Colonic mucosa (tissue), 4 donors: ENCODE measurements at regions of chr9 and their contacts with region 1.

Region 1: GRCh38 chr9:131053896-131054295 is 42.4 kb upstream of the AIF1L start:
- DNase-seq: no peak
- H3K4me3 ChIP-seq: no peak overlapping the region
- H3K27ac ChIP-seq: no peak overlapping the region
- H3K4me1 ChIP-seq: no peaks in the 10 kb centered on the region
- H3K27me3 ChIP-seq: no peaks in the 10 kb centered on the region
- CTCF ChIP-seq: no peak

Region 2: GRCh38 chr9:129981180-129981907 is 1072.6 kb before region 1 on chr9:
- intact Hi-C with region 1: no loop called
- DNase-seq: no peak
- H3K4me3 ChIP-seq: no peak overlapping the region
- H3K27ac ChIP-seq: no peak overlapping the region
- H3K4me1 ChIP-seq: no peaks in the 10 kb centered on the region
- H3K27me3 ChIP-seq: no peaks in the 10 kb centered on the region
- CTCF ChIP-seq: no peak

Region 3: DNA sequence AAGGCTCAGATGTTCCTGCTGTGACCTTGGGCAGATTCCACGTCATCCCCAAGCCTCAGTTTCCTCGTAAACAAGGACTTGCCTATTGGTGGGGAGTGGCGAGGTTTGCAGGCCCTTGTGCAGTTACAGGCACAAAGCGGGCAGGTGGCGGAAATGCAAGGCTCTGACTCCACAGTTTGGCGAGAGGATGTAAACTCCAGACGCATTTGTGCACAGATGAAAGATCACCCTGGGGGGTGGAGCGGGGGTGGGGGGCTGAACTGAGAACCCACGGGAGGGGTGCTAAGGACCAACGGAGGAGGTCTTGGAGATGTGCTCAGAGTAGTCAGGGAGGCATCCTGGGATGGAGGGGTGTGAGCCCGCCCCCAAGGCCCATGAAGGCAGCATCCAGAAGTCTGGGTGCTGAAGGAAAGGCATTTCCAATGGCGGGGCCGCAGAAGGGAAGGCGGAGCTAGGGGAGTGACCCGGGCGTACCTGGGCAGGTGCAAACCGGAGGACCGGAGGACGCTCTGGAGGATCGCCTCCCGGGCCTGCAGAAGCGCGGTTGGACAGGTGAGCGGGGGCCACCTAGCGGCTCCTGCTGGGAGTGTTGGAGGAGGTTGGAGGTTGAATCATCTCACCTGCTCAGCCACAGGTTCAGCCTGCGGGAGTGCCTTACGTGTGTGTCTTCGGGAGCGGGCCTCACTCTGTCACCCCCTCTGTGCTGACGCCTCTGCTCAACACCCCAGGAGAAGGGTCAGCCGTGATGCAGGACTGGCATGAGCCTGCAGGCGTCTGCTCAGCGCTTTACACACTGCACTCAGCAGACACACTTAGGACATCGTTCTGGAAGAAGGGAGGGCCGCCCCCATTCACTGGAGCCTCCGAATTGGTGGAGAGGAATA is 113.0 kb before region 1 on chr9:
- intact Hi-C with region 1: no loop called
- DNase-seq: peak; percentile 96
- H3K4me3 ChIP-seq: no peak overlapping the region
- H3K27ac ChIP-seq: no peak overlapping the region
- H3K4me1 ChIP-seq: peaks cover 4% of the 10 kb centered on the region
- H3K27me3 ChIP-seq: peaks cover 34% of the 10 kb centered on the region
- CTCF ChIP-seq: peak; percentile 87

Region 4: GRCh38 chr9:131122158-131122557 is 68.3 kb after region 1 on chr9:
- intact Hi-C with region 1: loop called (anchors 2 kb)
- DNase-seq: no peak
- H3K4me3 ChIP-seq: no peak overlapping the region
- H3K27ac ChIP-seq: no peak overlapping the region
- H3K4me1 ChIP-seq: peaks cover 14% of the 10 kb centered on the region
- H3K27me3 ChIP-seq: no peaks in the 10 kb centered on the region
- CTCF ChIP-seq: no peak

Region 5: GRCh38 chr9:131266266-131267229 is 212.7 kb after region 1 on chr9:
- intact Hi-C with region 1: no loop called
- DNase-seq: no peak
- H3K4me3 ChIP-seq: no peak overlapping the region
- H3K27ac ChIP-seq: peak overlapping the region; percentile 27
- H3K4me1 ChIP-seq: no peaks in the 10 kb centered on the region
- H3K27me3 ChIP-seq: no peaks in the 10 kb centered on the region
- CTCF ChIP-seq: no peak

Region 6: DNA sequence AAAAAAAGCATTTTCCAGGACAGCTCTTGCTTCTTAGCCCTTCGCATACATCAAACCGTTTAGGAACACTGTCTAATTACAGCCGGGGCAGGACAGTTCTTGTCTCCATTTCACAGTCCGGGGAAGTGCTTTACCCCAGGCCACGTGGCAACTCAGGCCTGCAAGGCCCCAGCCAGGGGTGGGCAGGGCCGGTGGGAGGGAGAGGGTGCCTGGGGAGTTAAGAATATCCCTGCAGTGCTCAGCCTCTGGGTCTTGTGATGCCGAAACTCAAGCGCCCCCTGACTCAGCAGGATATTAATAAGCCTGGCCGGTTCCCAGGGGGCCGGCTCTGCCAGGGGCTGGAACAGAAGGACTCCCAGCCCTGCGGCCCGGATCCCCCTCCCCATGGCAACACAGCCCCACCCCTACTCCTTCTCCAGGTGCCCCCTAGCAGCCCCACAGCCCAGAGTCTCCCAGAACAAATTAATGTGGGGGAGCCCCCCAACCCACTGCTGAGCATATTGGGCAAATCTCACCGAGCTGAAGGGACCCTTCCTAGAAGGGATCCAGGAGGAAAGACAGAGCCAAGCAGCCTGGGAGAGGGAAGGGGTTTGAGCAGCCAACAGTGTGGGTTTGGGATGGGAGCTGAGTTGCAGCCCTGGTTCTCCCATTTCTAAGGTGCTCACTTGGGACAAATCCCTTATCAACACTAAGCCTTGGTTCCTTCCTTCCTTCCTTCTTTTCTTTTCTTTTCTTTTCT is 280.9 kb after region 1 on chr9:
- intact Hi-C with region 1: loop called (anchors 5 kb)
- DNase-seq: peak; percentile 20
- H3K4me3 ChIP-seq: no peak overlapping the region
- H3K27ac ChIP-seq: no peak overlapping the region
- H3K4me1 ChIP-seq: no peaks in the 10 kb centered on the region
- H3K27me3 ChIP-seq: no peaks in the 10 kb centered on the region
- CTCF ChIP-seq: no peak

Region 7: DNA sequence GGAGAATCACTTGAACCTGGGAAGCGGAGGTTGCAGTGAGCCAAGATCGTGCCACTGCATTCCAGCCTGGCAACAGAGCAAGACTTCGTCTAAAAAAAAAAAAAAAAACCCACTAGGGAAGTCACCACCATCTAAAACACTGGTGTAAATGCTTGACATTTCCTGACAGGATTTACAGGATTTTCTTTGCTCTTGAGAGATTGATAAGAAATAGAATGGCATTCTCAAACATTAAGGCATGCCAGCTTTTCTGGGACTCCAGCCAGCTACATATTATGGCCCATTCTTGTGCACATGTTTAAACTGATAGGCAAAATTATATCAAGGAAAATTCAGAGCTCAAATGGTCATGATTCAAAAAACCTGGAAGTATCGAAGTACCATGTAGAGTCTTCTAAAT is 1645.1 kb after region 1 on chr9:
- intact Hi-C with region 1: no loop called
- DNase-seq: peak; percentile 48
- H3K4me3 ChIP-seq: no peak overlapping the region
- H3K27ac ChIP-seq: no peak overlapping the region
- H3K4me1 ChIP-seq: no peaks in the 10 kb centered on the region
- H3K27me3 ChIP-seq: no peaks in the 10 kb centered on the region
- CTCF ChIP-seq: no peak